ENCODE measurements at regions of chr20 and their contacts with region 1.

Region 1: GRCh38 chr20:21089395-21089794 is 16.8 kb downstream of the LINC00237 start:
- DNase-seq: no peak
- ATAC-seq: no peak

Region 2: DNA sequence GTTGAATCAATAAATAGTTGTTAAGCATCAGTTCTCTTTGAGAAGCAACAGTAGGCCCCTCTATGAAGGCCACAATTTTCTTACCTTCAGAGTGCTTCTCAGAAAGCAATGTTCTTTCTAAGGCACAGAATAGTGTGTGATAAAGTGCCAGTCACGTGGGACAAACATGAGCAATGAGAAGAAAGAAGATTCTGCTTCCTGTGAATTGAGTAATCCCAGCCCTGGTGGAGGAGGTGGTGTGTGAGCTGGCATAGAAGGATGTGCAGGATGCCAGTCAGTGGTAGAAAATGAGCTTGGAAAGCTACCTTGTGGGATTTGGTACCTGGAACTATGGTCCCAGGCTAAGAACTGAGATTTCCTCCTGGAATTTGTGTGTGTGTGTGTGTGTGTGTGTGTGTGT is 58.2 kb after region 1 on chr20:
- intact Hi-C with region 1: loop called in 1 of 2 experiments (anchors 10 kb)
- DNase-seq: no peak
- ATAC-seq: no peak

Region 3: GRCh38 chr20:21159658-21160380 is 70.4 kb after region 1 on chr20:
- intact Hi-C with region 1: no loop called
- DNase-seq: no peak
- ATAC-seq: no peak